Cardiac septum (tissue), 1 donor: ENCODE measurements at regions of chr17 and their contacts with region 1.

Region 1: DNA sequence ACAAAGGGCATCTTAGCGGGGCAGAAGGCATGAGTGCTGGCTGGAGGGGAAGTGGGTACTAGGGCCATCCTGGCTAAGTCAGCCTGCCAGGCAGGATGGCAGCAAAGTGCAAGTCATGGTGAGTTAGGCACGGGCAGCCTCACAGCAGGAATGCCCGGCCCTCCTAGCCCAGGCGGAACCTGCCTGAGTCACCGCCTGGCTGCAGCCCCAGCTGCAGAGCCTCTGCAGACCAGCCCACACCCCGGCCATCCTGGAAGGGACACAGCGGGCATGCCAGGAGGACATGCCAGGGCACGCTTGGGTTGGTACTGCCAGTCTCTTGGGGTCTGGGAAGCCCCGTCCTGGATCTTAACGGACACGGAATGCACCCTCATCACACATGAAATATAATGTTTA is 4.9 kb upstream of the ALDH3A1 start:
- DNase-seq: peak; percentile 90

Region 2: GRCh38 chr17:19706791-19707727 is 46.0 kb before region 1 on chr17:
- intact Hi-C with region 1: loop called (anchors 5 kb)
- DNase-seq: no peak

Region 3: GRCh38 chr17:19830061-19830460 is 77.0 kb after region 1 on chr17:
- intact Hi-C with region 1: no loop called
- DNase-seq: no peak

Region 4: GRCh38 chr17:19857640-19858039 is 104.6 kb after region 1 on chr17:
- intact Hi-C with region 1: no loop called
- DNase-seq: no peak